OCI-LY7 (cell line): ENCODE measurements at regions of chr14 and their contacts with region 1.

Region 1: GRCh38 chr14:65206448-65207096 is 104.3 kb upstream of the MAX start:
- DNase-seq: peak; percentile 88
- H3K4me3 ChIP-seq: peak overlapping the region; percentile 61
- H3K27ac ChIP-seq: peak overlapping the region; percentile 97
- H3K4me1 ChIP-seq: peaks cover 93% of the 10 kb centered on the region
- CTCF ChIP-seq: no peak

Region 2: DNA sequence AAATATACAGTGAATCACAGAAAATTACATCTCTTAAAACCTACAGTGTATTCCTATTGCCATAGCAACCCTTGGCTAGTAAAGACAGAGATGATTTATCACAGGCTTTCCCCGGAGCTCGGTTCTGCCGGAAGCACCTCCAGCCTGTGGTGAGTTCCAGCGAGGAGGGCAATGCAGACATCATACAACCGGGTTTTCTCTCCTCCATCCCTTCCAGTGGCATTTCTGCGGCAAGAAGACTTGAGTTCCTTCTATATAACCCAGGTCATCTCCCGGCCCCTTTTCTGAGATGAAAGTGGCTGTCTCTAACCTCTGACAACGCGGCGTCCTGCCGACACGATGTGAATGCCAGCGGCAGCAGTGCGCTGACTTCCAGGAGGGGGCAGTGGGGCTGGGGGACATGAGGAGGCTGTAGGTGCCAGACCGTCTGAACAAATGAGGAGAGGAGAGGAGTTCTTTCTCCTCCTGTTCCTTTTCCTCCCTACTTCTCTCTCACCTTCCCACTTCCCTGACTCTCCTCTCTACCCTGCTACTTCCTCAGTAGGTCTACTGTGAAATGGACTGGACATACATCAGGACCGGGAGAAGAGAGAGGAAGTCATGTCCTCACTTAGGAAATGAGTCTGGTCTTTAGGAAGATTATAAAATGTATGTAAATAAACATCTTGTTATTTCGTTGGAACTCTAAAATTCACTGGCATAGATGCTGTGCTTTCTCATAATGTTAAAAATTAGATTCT is 35.6 kb before region 1 on chr14:
- CTCF ChIA-PET with region 1: interaction called, 4 read pairs
- POLR2A ChIA-PET with region 1: interaction called, 28 read pairs
- intact Hi-C with region 1: loop called (anchors 2 kb)
- DNase-seq: peak; percentile 27
- H3K4me3 ChIP-seq: peak overlapping the region; percentile 41
- H3K27ac ChIP-seq: no peak overlapping the region
- H3K4me1 ChIP-seq: peaks cover 46% of the 10 kb centered on the region
- CTCF ChIP-seq: peak; percentile 66

Region 3: GRCh38 chr14:65222440-65222858 is 15.9 kb after region 1 on chr14:
- CTCF ChIA-PET with region 1: interaction called, 4 read pairs
- POLR2A ChIA-PET with region 1: interaction called, 15 read pairs
- intact Hi-C with region 1: no loop called
- DNase-seq: peak; percentile 77
- H3K4me3 ChIP-seq: no peak overlapping the region
- H3K27ac ChIP-seq: no peak overlapping the region
- H3K4me1 ChIP-seq: peaks cover 50% of the 10 kb centered on the region
- CTCF ChIP-seq: peak; percentile 99

Region 4: DNA sequence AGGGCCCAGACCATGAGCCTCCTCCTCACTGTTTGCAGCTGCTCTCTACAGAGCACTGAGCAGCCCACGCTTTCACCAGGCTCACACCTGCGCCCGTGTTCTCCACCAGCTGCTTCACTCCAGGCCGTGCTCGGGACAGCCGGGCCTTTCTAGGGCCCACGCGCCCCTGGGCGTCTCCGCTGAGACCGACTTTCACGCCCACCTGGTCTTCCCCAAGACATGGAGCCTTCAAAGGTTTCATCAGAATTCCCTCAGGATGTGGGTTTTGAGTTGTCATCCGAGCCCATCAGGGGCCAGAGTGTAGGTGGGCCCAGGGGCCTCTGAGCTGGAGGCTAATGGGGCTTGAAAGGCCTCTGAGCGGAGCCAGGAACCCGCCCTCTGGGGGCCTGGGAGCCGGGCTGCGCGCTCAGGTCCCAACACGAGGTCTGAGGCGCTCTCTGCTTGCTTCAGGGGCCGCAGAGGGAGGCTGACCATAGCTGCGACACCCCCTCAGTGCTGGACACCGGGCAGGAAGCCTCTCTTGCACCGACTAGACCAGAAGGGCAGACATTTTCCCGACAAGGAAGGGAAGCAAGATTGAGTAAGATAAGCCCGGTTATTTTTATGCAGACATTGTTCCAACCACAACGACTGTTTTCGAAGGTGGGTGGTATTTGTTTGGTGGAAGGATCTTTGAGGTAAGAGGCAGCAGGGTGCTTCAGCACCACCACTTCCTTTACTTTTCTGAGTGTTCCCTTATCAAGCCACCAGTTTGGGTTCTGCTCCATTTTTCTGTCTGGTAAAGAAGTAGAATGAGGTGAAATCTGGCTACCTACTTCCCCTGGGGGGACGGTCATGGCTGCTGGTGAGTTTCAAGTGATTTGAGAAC is 80.9 kb after region 1 on chr14:
- CTCF ChIA-PET with region 1: interaction called, 5 read pairs
- POLR2A ChIA-PET with region 1: interaction called, 16 read pairs
- intact Hi-C with region 1: loop called (anchors 2 kb)
- DNase-seq: peak; percentile 91
- H3K4me3 ChIP-seq: peak overlapping the region; percentile 45
- H3K27ac ChIP-seq: peak overlapping the region; percentile 90
- H3K4me1 ChIP-seq: peaks cover 93% of the 10 kb centered on the region
- CTCF ChIP-seq: 0 out of 2 replicates have a peak, but pooled peaks have one; percentile 27

Region 5: GRCh38 chr14:65321370-65321875 is 114.9 kb after region 1 on chr14:
- CTCF ChIA-PET with region 1: no interaction called
- POLR2A ChIA-PET with region 1: interaction called, 13 read pairs
- intact Hi-C with region 1: loop called (anchors 2 kb)
- DNase-seq: peak; percentile 38
- H3K4me3 ChIP-seq: peak overlapping the region; percentile 11
- H3K27ac ChIP-seq: peak overlapping the region; percentile 96
- H3K4me1 ChIP-seq: peaks cover 89% of the 10 kb centered on the region
- CTCF ChIP-seq: no peak

Region 6: DNA sequence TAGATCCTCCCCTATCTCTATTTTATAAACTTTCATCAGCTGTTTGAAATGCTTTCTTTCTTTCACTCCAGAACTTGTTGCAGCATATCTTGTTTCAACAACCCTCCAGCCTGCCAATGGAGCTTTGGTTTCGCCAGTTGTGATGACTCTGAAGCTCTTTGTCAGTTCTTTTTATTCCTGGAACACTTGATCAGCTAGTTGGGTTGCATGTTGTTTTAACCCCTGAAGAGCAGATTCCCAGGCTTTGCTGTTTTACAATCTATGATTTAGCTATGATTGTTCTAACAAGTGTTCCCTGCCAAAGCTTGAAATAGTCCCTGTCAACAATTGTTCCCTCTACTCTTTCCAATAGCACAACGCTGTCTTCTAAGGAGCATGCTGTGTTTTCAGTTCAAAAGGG is 155.3 kb after region 1 on chr14:
- CTCF ChIA-PET with region 1: no interaction called
- POLR2A ChIA-PET with region 1: interaction called, 11 read pairs
- intact Hi-C with region 1: no loop called
- DNase-seq: no peak
- H3K4me3 ChIP-seq: no peak overlapping the region
- H3K27ac ChIP-seq: no peak overlapping the region
- H3K4me1 ChIP-seq: peaks cover 54% of the 10 kb centered on the region
- CTCF ChIP-seq: no peak